Calu3 (cell line): ENCODE measurements at regions of chr6 and their contacts with region 1.

Region 1: GRCh38 chr6:45522486-45522885 is 144.8 kb upstream of the SUPT3H start:
- DNase-seq: no peak
- H3K4me3 Mint-ChIP-seq: no peak overlapping the region
- H3K27ac Mint-ChIP-seq: no peak overlapping the region
- H3K4me1 Mint-ChIP-seq: no peaks in the 10 kb centered on the region
- H3K27me3 Mint-ChIP-seq: peaks cover 13% of the 10 kb centered on the region
- CTCF ChIP-seq: no peak

Region 2: GRCh38 chr6:45421709-45422502 is 100.6 kb before region 1 on chr6:
- CTCF ChIA-PET with region 1: no interaction called
- intact Hi-C with region 1: loop called (anchors 5 kb)
- DNase-seq: peak; percentile 61
- H3K4me3 Mint-ChIP-seq: peak overlapping the region; percentile 82
- H3K27ac Mint-ChIP-seq: peak overlapping the region; percentile 35
- H3K4me1 Mint-ChIP-seq: no peaks in the 10 kb centered on the region
- H3K27me3 Mint-ChIP-seq: peaks cover 50% of the 10 kb centered on the region
- CTCF ChIP-seq: no peak